ENCODE measurements at regions of chr7 and their contacts with region 1.

Region 1: GRCh38 chr7:88243345-88243909 is 23.6 kb upstream of the SRI start:
- DNase-seq: peak; percentile 7
- ATAC-seq: peak; percentile 86
- H3K4me3 ChIP-seq: no peak overlapping the region
- H3K27ac ChIP-seq: no peak overlapping the region
- H3K4me1 ChIP-seq: no peaks in the 10 kb centered on the region
- H3K27me3 ChIP-seq: no peaks in the 10 kb centered on the region
- CTCF ChIP-seq: peak; percentile 57 to 83 (median 65)
- EP300 ChIP-seq: no peak
- POLR2A ChIP-seq: no peak
- RAD21 ChIP-seq: peak; percentile 86

Region 2: GRCh38 chr7:88219781-88220747 is 23.4 kb before region 1 on chr7 and contains the start of gene SRI:
- CTCF ChIA-PET with region 1: interaction called, 10 read pairs
- POLR2A ChIA-PET with region 1: no interaction called
- RAD21 ChIA-PET with region 1: interaction called, 10 read pairs
- SMC1A ChIA-PET with region 1: interaction called, 3 read pairs
- in situ Hi-C with region 1: no loop called
- intact Hi-C with region 1: no loop called
- DNase-seq: peak; percentile 40
- ATAC-seq: peak; percentile 83
- H3K4me3 ChIP-seq: peak within 1 kb of the TSS; percentile 80
- H3K27ac ChIP-seq: peak within 1 kb of the TSS; percentile 74
- H3K4me1 ChIP-seq: no peaks in the 10 kb centered on the region
- H3K27me3 ChIP-seq: no peaks in the 10 kb centered on the region
- CTCF ChIP-seq: peak; percentile 43 to 73 (median 70); a peak in 5 of 6 replicates
- EP300 ChIP-seq: no peak
- POLR2A ChIP-seq: peak; percentile 95
- RAD21 ChIP-seq: no peak
- polyA plus RNA-seq, gene SRI: 174 to 259 TPM

Region 3: GRCh38 chr7:88300401-88300945 is 57.0 kb after region 1 on chr7:
- CTCF ChIA-PET with region 1: interaction called, 20 read pairs
- POLR2A ChIA-PET with region 1: no interaction called
- RAD21 ChIA-PET with region 1: interaction called, 3 read pairs
- SMC1A ChIA-PET with region 1: interaction called, 3 read pairs
- in situ Hi-C with region 1: no loop called
- intact Hi-C with region 1: no loop called
- DNase-seq: no peak
- ATAC-seq: no peak
- H3K4me3 ChIP-seq: no peak overlapping the region
- H3K27ac ChIP-seq: no peak overlapping the region
- H3K4me1 ChIP-seq: no peaks in the 10 kb centered on the region
- H3K27me3 ChIP-seq: peaks cover 0 to 2% of the 10 kb centered on the region in 2 experiments; a peak in 1 of 4 replicates
- CTCF ChIP-seq: no peak
- EP300 ChIP-seq: no peak
- POLR2A ChIP-seq: no peak
- RAD21 ChIP-seq: no peak

Region 4: DNA sequence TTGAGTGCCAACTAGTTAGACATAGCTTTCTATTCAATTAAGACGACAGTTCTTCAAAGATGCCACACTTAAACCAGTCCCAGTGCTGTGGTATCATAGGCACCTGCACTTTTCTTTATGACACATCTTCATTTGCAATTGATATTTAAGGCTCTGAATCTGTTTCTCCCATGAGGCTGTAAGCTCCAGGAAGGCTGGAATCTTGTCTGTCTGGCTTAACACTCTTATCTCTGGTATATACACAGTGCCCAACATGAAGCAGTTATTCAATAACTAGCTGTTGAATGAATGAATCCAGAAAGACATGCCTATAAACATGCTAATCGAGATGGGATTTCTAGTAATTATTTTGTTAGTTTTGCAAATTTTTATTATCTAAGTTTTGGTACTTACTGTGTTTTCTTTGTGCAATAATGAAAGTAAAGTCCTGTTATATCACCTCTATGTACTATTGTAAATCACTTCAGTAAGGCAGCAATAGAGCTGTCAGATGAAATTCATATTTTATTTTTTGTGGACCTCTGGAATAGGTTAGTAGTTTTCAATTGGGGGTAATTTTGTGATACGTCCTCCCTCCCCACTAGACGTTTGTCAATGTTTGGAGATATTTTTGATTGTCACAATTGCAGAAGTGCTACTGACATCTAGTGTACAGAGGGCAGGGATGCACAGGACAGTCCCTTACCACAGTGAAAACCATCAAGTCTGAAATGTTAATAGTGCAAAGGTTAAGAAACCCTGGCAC is 114.5 kb after region 1 on chr7:
- CTCF ChIA-PET with region 1: interaction called, 129 read pairs
- POLR2A ChIA-PET with region 1: interaction called, 3 read pairs
- RAD21 ChIA-PET with region 1: interaction called, 81 read pairs
- SMC1A ChIA-PET with region 1: interaction called, 89 read pairs
- in situ Hi-C with region 1: no loop called
- intact Hi-C with region 1: loop called (anchors 1 kb)
- DNase-seq: no peak
- ATAC-seq: peak; percentile 86
- H3K4me3 ChIP-seq: no peak overlapping the region
- H3K27ac ChIP-seq: no peak overlapping the region
- H3K4me1 ChIP-seq: no peaks in the 10 kb centered on the region
- H3K27me3 ChIP-seq: no peaks in the 10 kb centered on the region
- CTCF ChIP-seq: peak; percentile 50 to 73 (median 59)
- EP300 ChIP-seq: no peak
- POLR2A ChIP-seq: no peak
- RAD21 ChIP-seq: peak; percentile 68

Region 5: DNA sequence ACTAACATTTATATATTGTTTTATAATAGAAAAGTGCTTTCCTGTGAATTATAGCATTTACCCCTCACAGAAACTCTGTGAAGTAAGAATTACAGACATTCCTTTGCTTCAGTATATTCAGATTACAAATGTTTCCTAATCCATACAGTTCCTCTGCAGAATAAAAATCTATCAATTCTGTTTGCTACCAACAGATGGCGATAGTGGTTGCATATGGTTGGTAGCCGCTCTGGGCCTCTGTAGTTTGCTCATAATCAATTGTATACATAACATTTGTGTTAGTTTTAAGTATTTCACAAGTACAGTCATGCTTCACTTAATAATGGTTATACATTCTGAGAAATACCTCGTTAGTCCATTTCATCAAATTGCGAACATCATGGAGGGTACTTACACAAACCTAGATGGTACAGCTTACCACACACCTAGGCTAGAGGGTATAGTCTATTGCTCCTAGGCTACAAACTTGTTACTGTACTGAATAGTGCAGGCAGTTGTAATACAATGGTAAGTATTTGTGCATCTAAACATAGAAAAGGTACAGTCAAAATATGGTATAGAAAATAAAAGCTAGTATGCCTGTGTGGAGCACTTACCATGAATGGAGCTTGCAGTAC is 157.7 kb after region 1 on chr7:
- CTCF ChIA-PET with region 1: interaction called, 11 read pairs
- POLR2A ChIA-PET with region 1: no interaction called
- RAD21 ChIA-PET with region 1: interaction called, 15 read pairs
- SMC1A ChIA-PET with region 1: interaction called, 9 read pairs
- in situ Hi-C with region 1: no loop called
- intact Hi-C with region 1: loop called (anchors 5 kb)
- DNase-seq: no peak
- ATAC-seq: peak; percentile 55
- H3K4me3 ChIP-seq: no peak overlapping the region
- H3K27ac ChIP-seq: no peak overlapping the region
- H3K4me1 ChIP-seq: no peaks in the 10 kb centered on the region
- H3K27me3 ChIP-seq: no peaks in the 10 kb centered on the region
- CTCF ChIP-seq: peak; percentile 47 to 60 (median 58)
- EP300 ChIP-seq: no peak
- POLR2A ChIP-seq: no peak
- RAD21 ChIP-seq: peak; percentile 56

Region 6: GRCh38 chr7:88835147-88835728 is 591.8 kb after region 1 on chr7:
- CTCF ChIA-PET with region 1: interaction called, 43 read pairs
- POLR2A ChIA-PET with region 1: no interaction called
- RAD21 ChIA-PET with region 1: interaction called, 29 read pairs
- SMC1A ChIA-PET with region 1: interaction called, 14 read pairs
- in situ Hi-C with region 1: loop called (anchors 25 kb)
- intact Hi-C with region 1: loop called (anchors 2 kb)
- DNase-seq: peak; percentile 15
- ATAC-seq: peak; percentile 97
- H3K4me3 ChIP-seq: no peak overlapping the region
- H3K27ac ChIP-seq: no peak overlapping the region
- H3K4me1 ChIP-seq: no peaks in the 10 kb centered on the region
- H3K27me3 ChIP-seq: no peaks in the 10 kb centered on the region
- CTCF ChIP-seq: peak; percentile 47 to 63 (median 59)
- EP300 ChIP-seq: 0 out of 4 replicates have a peak, but pooled peaks of 1 of the 2 experiments have one; percentile 19
- POLR2A ChIP-seq: no peak
- RAD21 ChIP-seq: peak; percentile 71